PC-3 (cell line): ENCODE measurements at regions of chr3 and their contacts with region 1.

Region 1: GRCh38 chr3:152961323-152961722 is 126.4 kb downstream of the P2RY1 start:
- DNase-seq: peak; percentile 78
- ATAC-seq: peak; percentile 60
- H3K4me3 ChIP-seq: no peak overlapping the region
- H3K27ac ChIP-seq: no peak overlapping the region
- H3K4me1 ChIP-seq: peaks cover 27% of the 10 kb centered on the region
- H3K27me3 ChIP-seq: no peaks in the 10 kb centered on the region
- CTCF ChIP-seq: peak; percentile 83

Region 2: GRCh38 chr3:152471814-152472671 is 489.3 kb before region 1 on chr3:
- CTCF ChIA-PET with region 1: no interaction called
- POLR2A ChIA-PET with region 1: interaction called, 4 read pairs
- intact Hi-C with region 1: loop called (anchors 1 kb)
- DNase-seq: peak; percentile 77
- ATAC-seq: peak; percentile 85
- H3K4me3 ChIP-seq: peak overlapping the region; percentile 11; the same call in 1 of the 2 replicates
- H3K27ac ChIP-seq: no peak overlapping the region
- H3K4me1 ChIP-seq: no peaks in the 10 kb centered on the region
- H3K27me3 ChIP-seq: no peaks in the 10 kb centered on the region
- CTCF ChIP-seq: peak; percentile 74

Region 3: GRCh38 chr3:152508705-152509104 is 452.6 kb before region 1 on chr3:
- CTCF ChIA-PET with region 1: no interaction called
- POLR2A ChIA-PET with region 1: no interaction called
- intact Hi-C with region 1: loop called (anchors 1 kb)
- DNase-seq: peak; percentile 61
- ATAC-seq: peak; percentile 48; the same call in 1 of the 2 replicates
- H3K4me3 ChIP-seq: no peak overlapping the region
- H3K27ac ChIP-seq: no peak overlapping the region
- H3K4me1 ChIP-seq: no peaks in the 10 kb centered on the region
- H3K27me3 ChIP-seq: no peaks in the 10 kb centered on the region; the same call in 1 of the 2 replicates
- CTCF ChIP-seq: peak; percentile 58

Region 4: GRCh38 chr3:152574461-152575079 is 386.8 kb before region 1 on chr3:
- CTCF ChIA-PET with region 1: no interaction called
- POLR2A ChIA-PET with region 1: no interaction called
- intact Hi-C with region 1: loop called (anchors 5 kb)
- DNase-seq: peak; percentile 66
- ATAC-seq: peak; percentile 88
- H3K4me3 ChIP-seq: no peak overlapping the region
- H3K27ac ChIP-seq: no peak overlapping the region
- H3K4me1 ChIP-seq: no peaks in the 10 kb centered on the region
- H3K27me3 ChIP-seq: peaks cover 45% of the 10 kb centered on the region
- CTCF ChIP-seq: peak; percentile 78

Region 5: DNA sequence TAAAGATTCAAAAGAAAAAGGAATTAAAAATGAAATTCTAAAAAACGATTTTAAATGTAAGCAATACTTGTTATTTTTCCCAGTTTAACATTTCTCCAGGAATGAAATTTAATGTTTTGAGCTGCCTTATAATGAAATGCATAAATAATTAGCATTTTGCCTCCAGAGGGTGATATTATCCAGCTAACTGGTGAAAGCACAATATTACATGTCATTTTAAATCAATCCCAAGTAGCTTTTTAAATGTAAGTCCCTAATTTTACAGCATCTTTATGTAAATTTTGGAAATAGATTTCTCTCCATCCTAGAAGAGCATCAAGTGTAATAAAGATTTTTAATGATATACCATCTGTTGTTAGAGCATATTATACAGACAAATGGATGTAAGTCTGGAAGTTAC is 265.5 kb before region 1 on chr3:
- CTCF ChIA-PET with region 1: no interaction called
- POLR2A ChIA-PET with region 1: no interaction called
- intact Hi-C with region 1: loop called (anchors 2 kb)
- DNase-seq: no peak
- ATAC-seq: no peak
- H3K4me3 ChIP-seq: no peak overlapping the region
- H3K27ac ChIP-seq: no peak overlapping the region
- H3K4me1 ChIP-seq: no peaks in the 10 kb centered on the region
- H3K27me3 ChIP-seq: no peaks in the 10 kb centered on the region
- CTCF ChIP-seq: no peak

Region 6: GRCh38 chr3:152834776-152835600 is 126.3 kb before region 1 on chr3 and contains the start of gene P2RY1:
- CTCF ChIA-PET with region 1: no interaction called
- POLR2A ChIA-PET with region 1: no interaction called
- intact Hi-C with region 1: loop called (anchors 2 kb)
- DNase-seq: peak; percentile 58
- ATAC-seq: peak; percentile 82
- H3K4me3 ChIP-seq: peak within 1 kb of the TSS; percentile 86
- H3K27ac ChIP-seq: no peak within 1 kb of the TSS
- H3K4me1 ChIP-seq: no peaks in the 10 kb centered on the region
- H3K27me3 ChIP-seq: peaks cover 58% of the 10 kb centered on the region
- CTCF ChIP-seq: peak; percentile 37; the same call in 1 of the 2 replicates
- total RNA-seq, gene P2RY1: 0.29 and 0.81 TPM in 2 replicates

Region 7: DNA sequence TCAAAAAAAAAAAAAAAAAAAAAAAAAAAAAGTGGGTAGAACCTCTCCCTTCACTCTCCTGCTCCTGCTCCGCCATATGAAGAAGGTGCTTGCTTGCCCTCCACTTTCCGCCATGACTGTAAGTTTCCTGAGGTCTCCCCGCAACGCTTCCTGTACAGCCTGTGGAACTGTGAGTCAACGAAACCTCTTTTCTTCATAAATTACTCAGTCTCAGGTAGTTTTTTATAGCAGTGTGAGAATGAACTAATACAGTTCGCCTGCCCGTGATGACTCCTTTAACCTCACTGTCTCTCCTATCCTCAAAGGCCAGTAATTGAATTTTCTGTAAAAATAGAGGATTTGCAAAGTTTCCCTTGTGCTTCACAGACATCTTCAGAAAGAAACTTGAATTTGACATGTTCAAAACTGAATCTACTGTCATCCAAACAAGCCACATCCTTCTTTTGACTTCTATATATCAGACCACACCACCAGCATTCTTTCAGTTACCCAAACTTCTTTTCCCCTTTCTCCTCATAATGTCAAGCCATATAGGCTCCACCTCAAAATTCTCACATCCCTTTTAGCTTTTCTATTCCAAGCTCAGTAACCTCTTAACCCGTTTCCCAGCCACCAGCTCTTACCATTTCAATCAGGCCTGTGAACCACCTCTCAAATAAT is 82.1 kb before region 1 on chr3:
- CTCF ChIA-PET with region 1: no interaction called
- POLR2A ChIA-PET with region 1: no interaction called
- intact Hi-C with region 1: loop called (anchors 2 kb)
- DNase-seq: no peak
- ATAC-seq: no peak
- H3K4me3 ChIP-seq: no peak overlapping the region
- H3K27ac ChIP-seq: no peak overlapping the region
- H3K4me1 ChIP-seq: 0 out of 2 replicates have a peak, but pooled peaks cover 4% of the 10 kb centered on the region
- H3K27me3 ChIP-seq: no peaks in the 10 kb centered on the region
- CTCF ChIP-seq: no peak

Region 8: DNA sequence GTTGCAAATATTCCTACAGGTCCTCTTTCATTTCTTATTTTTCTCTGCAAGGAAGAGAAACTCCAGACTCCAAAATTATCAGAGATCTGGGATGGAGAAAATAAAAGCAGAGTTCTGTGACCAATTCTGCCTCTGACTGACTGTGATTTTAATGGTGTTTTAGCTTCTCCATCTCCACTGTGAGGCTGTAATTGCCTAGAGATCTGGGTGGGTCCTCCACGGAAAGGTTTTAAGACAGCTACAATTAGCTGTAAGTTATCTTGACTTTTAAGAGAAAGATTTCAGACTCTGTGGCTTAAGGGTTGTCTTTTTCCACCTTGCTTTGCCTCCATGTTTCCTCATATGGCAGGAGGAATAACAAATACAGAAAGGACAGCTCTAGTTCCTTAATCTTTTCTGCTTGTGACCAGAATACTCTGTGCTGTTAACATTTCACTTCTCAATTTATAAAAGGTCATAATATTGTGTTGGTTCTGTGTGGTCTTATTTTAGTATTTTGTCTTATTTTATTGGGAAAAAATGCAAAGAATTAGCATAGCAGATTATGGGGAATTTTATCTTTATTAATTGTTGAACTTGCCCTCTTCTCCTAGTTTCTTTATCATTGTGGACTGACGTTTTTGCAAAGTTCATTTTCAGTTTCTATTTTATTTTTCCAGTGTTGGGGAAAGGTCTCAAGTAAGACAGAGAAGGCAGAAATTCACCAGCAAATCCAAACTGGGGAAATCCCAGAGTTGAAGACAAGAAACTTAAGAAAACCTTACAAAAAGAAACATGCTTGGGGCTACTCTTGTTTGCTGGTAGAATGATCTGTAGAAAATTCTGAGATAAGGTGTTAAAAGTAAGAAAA is 358.6 kb after region 1 on chr3:
- CTCF ChIA-PET with region 1: no interaction called
- POLR2A ChIA-PET with region 1: no interaction called
- intact Hi-C with region 1: no loop called
- DNase-seq: no peak
- ATAC-seq: no peak
- H3K4me3 ChIP-seq: no peak overlapping the region
- H3K27ac ChIP-seq: no peak overlapping the region
- H3K4me1 ChIP-seq: 0 out of 2 replicates have a peak, but pooled peaks cover 5% of the 10 kb centered on the region
- H3K27me3 ChIP-seq: no peaks in the 10 kb centered on the region
- CTCF ChIP-seq: no peak